Motor neuron (in vitro differentiated cells): ENCODE measurements at regions of chr16 and their contacts with region 1.

Region 1: DNA sequence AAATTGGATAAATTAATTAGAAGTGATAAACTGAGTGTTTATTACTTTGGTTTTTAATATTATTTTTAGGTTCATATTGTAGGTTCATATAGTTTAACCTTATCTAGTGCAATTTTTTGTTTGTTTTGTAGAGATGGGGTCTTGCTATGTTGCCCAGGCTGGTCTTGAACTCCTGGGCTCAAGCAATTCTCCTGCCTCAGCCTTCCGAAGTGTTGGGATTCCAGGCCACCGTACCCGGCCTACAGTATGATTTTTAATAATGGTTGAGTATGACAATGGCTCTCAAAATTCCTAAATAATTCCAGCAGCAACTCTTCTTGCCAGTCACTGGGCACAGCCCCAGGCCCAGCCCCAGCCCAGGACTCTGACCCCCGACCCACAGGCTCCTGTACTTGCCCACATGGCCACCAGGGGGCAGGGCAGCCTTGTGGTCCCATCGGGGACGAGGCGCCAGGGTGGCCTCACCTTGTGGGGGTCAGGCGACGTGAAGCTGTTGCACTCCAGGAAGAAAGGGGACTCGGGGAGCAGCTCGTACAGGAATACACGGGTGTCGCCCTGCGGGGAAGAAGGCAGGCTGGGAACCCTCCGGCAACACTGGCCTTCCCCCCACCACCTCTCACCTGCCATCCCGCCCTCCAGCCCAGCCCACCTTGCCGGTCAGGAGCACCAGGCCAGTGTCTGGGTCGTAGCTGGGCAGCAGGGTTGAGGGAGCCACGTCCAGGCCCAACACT is 7.9 kb upstream of the PAM16 start:
- ATAC-seq: peak; percentile 28 to 87 (median 62)
- H3K4me3 ChIP-seq: no peak overlapping the region
- H3K27ac ChIP-seq: no peak overlapping the region
- H3K4me1 ChIP-seq: peaks cover 0 to 2% of the 10 kb centered on the region in 2 donors

Region 2: DNA sequence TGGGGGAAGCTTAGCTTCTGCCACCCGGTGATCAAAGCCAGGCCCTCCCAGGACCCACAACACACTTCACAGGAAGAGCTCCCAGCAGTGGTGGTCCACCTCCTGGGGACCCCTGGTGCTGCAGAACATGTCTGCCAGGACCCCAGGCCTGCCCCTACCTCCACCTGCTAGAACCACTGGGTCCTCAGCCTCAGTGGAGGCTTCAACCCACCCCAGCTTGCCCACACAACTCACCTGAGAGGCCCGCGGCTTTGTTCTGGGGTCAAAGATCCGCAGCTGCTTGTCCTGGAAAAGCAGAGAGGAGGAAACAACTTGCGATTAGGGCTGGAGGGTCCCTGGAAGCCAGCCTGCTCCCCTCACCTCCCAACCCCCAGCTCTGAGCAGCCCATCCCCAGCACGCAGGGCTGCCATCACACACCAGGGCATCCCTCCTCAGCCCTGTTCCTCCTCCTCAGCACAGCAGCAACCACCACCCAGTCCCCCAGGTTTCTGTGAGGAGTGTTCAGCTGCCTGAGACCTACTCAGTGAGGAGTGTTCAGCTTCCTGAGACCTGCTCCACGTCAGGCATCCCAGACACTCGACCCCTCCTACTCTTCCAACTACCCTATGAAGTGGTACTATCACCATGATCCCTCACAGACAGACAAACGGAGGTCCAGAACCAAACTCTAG is 36.2 kb after region 1 on chr16:
- in situ Hi-C with region 1: loop called in 2 of 9 experiments (anchors 5 to 10 kb)
- ATAC-seq: no peak
- H3K4me3 ChIP-seq: no peak overlapping the region
- H3K27ac ChIP-seq: no peak overlapping the region
- H3K4me1 ChIP-seq: peaks cover 18 to 20% of the 10 kb centered on the region in 2 donors

Region 3: GRCh38 chr16:4574919-4575705 is 216.1 kb after region 1 on chr16:
- in situ Hi-C with region 1: no loop called
- ATAC-seq: peak in 1 of 8 experiments; percentile 45
- H3K4me3 ChIP-seq: no peak overlapping the region
- H3K27ac ChIP-seq: no peak overlapping the region
- H3K4me1 ChIP-seq: no peaks in the 10 kb centered on the region